ENCODE measurements at regions of chr10 and their contacts with region 1.

Region 1: GRCh38 chr10:124697830-124698544 is 46.2 kb downstream of the FAM53B start:
- DNase-seq: peak; percentile 40 to 79 (median 50)
- H3K4me3 ChIP-seq: peak overlapping the region; percentile 11 to 30
- H3K4me3 Mint-ChIP-seq: peak overlapping the region; percentile 20 to 96 (median 80)
- H3K27ac ChIP-seq: peak overlapping the region; percentile 90
- H3K27ac Mint-ChIP-seq: peak overlapping the region; percentile 92 to 99 (median 97)
- H3K4me1 ChIP-seq: peaks cover 100% of the 10 kb centered on the region
- H3K4me1 Mint-ChIP-seq: peaks cover 69 to 100% (median 93%) of the 10 kb centered on the region in 4 donors
- H3K27me3 ChIP-seq: no peaks in the 10 kb centered on the region
- H3K27me3 Mint-ChIP-seq: no peaks in the 10 kb centered on the region

Region 2: DNA sequence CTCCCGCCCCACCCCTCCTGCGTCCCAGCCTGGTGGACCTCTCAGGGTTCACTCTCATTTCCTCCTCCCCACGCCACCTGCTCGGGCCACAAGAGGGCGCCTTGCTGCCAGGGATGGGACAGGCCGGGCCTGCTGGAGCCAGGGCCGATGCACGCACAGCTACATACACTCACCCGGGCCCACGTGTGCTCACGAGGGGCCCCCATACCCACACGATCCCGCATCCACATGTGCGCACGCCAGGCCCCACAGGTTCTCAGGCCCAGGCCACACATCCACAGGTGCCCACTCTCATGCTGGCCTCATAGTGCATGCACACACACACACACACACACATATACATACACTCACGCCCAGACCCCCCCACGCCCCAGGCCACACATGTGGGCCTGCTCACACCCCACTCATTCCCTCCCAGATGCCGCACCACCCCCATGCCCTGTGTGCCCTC is 167.7 kb before region 1 on chr10:
- CTCF ChIA-PET with region 1: no interaction called
- POLR2A ChIA-PET with region 1: no interaction called
- intact Hi-C with region 1: no loop called
- DNase-seq: peak; percentile 81 to 84 (median 82)
- H3K4me3 ChIP-seq: no peak overlapping the region
- H3K4me3 Mint-ChIP-seq: peak overlapping the region in 4 of 8 donors; percentile 6 to 75 (median 42)
- H3K27ac ChIP-seq: no peak overlapping the region
- H3K27ac Mint-ChIP-seq: peak overlapping the region in 2 of 7 donors; percentile 81 to 82
- H3K4me1 ChIP-seq: peaks cover 8% of the 10 kb centered on the region
- H3K4me1 Mint-ChIP-seq: peaks cover 3 to 5% (median 4%) of the 10 kb centered on the region in 4 donors
- H3K27me3 ChIP-seq: no peaks in the 10 kb centered on the region
- H3K27me3 Mint-ChIP-seq: no peaks in the 10 kb centered on the region

Region 3: DNA sequence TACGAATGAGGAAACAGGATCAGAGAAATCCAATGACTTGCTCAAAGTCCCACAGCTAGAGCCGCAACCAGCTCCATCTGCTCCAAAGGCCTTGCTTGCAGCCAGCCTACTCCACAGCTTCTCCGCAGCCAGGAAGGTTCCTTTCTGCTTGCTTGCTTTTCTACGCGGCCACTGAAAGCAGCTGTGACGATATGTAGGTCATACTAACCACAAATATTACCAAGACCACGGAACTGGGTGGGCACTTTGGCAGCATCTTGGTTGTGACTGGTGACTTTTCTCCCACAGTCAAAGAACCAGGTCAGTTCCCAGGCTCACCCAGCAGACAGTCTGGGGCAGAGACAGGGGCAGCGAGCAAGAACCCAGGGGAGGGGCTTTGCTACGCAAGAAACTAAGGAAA is 40.2 kb before region 1 on chr10:
- CTCF ChIA-PET with region 1: interaction called, 6 read pairs
- POLR2A ChIA-PET with region 1: interaction called, 25 read pairs
- intact Hi-C with region 1: no loop called
- DNase-seq: peak; percentile 60 to 79 (median 77)
- H3K4me3 ChIP-seq: peak overlapping the region; percentile 13 to 36
- H3K4me3 Mint-ChIP-seq: peak overlapping the region; percentile 31 to 87 (median 78)
- H3K27ac ChIP-seq: peak overlapping the region; percentile 67
- H3K27ac Mint-ChIP-seq: peak overlapping the region; percentile 88 to 98 (median 95)
- H3K4me1 ChIP-seq: peaks cover 92% of the 10 kb centered on the region
- H3K4me1 Mint-ChIP-seq: peaks cover 68 to 97% (median 84%) of the 10 kb centered on the region in 4 donors
- H3K27me3 ChIP-seq: no peaks in the 10 kb centered on the region
- H3K27me3 Mint-ChIP-seq: no peaks in the 10 kb centered on the region

Region 4: GRCh38 chr10:124677749-124678556 is 20.0 kb before region 1 on chr10:
- CTCF ChIA-PET with region 1: interaction called, 11 read pairs
- POLR2A ChIA-PET with region 1: interaction called, 118 read pairs
- intact Hi-C with region 1: loop called (anchors 1 kb)
- DNase-seq: no peak
- H3K4me3 ChIP-seq: peak overlapping the region; percentile 36 to 56
- H3K4me3 Mint-ChIP-seq: peak overlapping the region; percentile 76 to 88 (median 79)
- H3K27ac ChIP-seq: peak overlapping the region; percentile 54
- H3K27ac Mint-ChIP-seq: peak overlapping the region; percentile 85 to 97 (median 92)
- H3K4me1 ChIP-seq: peaks cover 96% of the 10 kb centered on the region
- H3K4me1 Mint-ChIP-seq: peaks cover 70 to 99% (median 89%) of the 10 kb centered on the region in 4 donors
- H3K27me3 ChIP-seq: no peaks in the 10 kb centered on the region
- H3K27me3 Mint-ChIP-seq: no peaks in the 10 kb centered on the region

Region 5: GRCh38 chr10:124708922-124709520 is 11.0 kb after region 1 on chr10:
- CTCF ChIA-PET with region 1: interaction called, 201 read pairs
- POLR2A ChIA-PET with region 1: interaction called, 544 read pairs
- intact Hi-C with region 1: no loop called
- DNase-seq: peak in 1 of 5 donors; percentile 53
- H3K4me3 ChIP-seq: no peak overlapping the region
- H3K4me3 Mint-ChIP-seq: peak overlapping the region in 7 of 8 donors; percentile 40 to 77 (median 57)
- H3K27ac ChIP-seq: peak overlapping the region; percentile 90
- H3K27ac Mint-ChIP-seq: peak overlapping the region; percentile 90 to 97 (median 95)
- H3K4me1 ChIP-seq: peaks cover 97% of the 10 kb centered on the region
- H3K4me1 Mint-ChIP-seq: peaks cover 78 to 93% (median 86%) of the 10 kb centered on the region in 4 donors
- H3K27me3 ChIP-seq: no peaks in the 10 kb centered on the region
- H3K27me3 Mint-ChIP-seq: no peaks in the 10 kb centered on the region

Region 6: GRCh38 chr10:124842721-124843120 is 144.7 kb after region 1 on chr10:
- CTCF ChIA-PET with region 1: no interaction called
- POLR2A ChIA-PET with region 1: no interaction called
- intact Hi-C with region 1: no loop called
- DNase-seq: no peak
- H3K4me3 ChIP-seq: no peak overlapping the region
- H3K4me3 Mint-ChIP-seq: no peak overlapping the region
- H3K27ac ChIP-seq: no peak overlapping the region
- H3K27ac Mint-ChIP-seq: no peak overlapping the region
- H3K4me1 ChIP-seq: no peaks in the 10 kb centered on the region
- H3K4me1 Mint-ChIP-seq: no peaks in the 10 kb centered on the region
- H3K27me3 ChIP-seq: no peaks in the 10 kb centered on the region
- H3K27me3 Mint-ChIP-seq: peaks cover 0 to 2% of the 10 kb centered on the region in 2 donors

Region 7: GRCh38 chr10:124864421-124865193 is 166.6 kb after region 1 on chr10:
- CTCF ChIA-PET with region 1: no interaction called
- POLR2A ChIA-PET with region 1: no interaction called
- intact Hi-C with region 1: no loop called
- DNase-seq: no peak
- H3K4me3 ChIP-seq: no peak overlapping the region
- H3K4me3 Mint-ChIP-seq: no peak overlapping the region
- H3K27ac ChIP-seq: no peak overlapping the region
- H3K27ac Mint-ChIP-seq: no peak overlapping the region
- H3K4me1 ChIP-seq: no peaks in the 10 kb centered on the region
- H3K4me1 Mint-ChIP-seq: no peaks in the 10 kb centered on the region
- H3K27me3 ChIP-seq: no peaks in the 10 kb centered on the region
- H3K27me3 Mint-ChIP-seq: peaks cover 2 to 3% of the 10 kb centered on the region in 2 donors